ENCODE measurements at regions of chr5 and their contacts with region 1.

Region 1: GRCh38 chr5:58424181-58424580 is 35.7 kb downstream of the PLK2 start:
- DNase-seq: no peak
- H3K4me3 ChIP-seq: no peak overlapping the region
- H3K27ac ChIP-seq: no peak overlapping the region
- H3K4me1 ChIP-seq: no peaks in the 10 kb centered on the region
- H3K27me3 ChIP-seq: no peaks in the 10 kb centered on the region
- CTCF ChIP-seq: no peak
- POLR2A ChIP-seq: no peak

Region 2: DNA sequence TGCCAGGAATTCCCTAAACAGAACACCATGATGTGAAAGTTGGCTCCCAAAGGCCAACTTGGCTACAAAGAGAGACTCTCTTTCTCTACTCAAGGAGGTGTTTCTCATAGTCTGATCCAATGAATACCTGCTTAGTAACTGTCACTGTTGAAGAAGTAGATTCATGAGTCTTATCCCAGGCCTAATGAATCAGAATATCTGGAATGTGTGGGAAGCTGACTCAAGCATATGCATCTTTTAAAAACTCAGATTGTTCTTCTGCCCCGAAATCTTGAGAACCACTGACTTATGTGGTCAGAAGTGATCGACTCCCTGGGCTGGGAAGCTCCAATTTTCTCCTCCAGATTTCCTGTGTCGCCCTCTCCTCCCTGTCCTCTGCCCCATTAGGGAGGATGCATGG is 309.9 kb before region 1 on chr5:
- CTCF ChIA-PET with region 1: no interaction called
- POLR2A ChIA-PET with region 1: no interaction called
- dilution Hi-C with region 1: no loop called
- intact Hi-C with region 1: loop called (anchors 1 kb)
- DNase-seq: no peak
- H3K4me3 ChIP-seq: no peak overlapping the region
- H3K27ac ChIP-seq: no peak overlapping the region
- H3K4me1 ChIP-seq: no peaks in the 10 kb centered on the region
- H3K27me3 ChIP-seq: no peaks in the 10 kb centered on the region
- CTCF ChIP-seq: no peak
- POLR2A ChIP-seq: no peak

Measured in endothelial cell of umbilical vein (primary cell).